Activated CD8-positive, alpha-beta T cell treated with anti-CD3 and anti-CD28 coated beads for 36 hours (primary cell): ENCODE measurements at regions of chr17 and their contacts with region 1.

Region 1: DNA sequence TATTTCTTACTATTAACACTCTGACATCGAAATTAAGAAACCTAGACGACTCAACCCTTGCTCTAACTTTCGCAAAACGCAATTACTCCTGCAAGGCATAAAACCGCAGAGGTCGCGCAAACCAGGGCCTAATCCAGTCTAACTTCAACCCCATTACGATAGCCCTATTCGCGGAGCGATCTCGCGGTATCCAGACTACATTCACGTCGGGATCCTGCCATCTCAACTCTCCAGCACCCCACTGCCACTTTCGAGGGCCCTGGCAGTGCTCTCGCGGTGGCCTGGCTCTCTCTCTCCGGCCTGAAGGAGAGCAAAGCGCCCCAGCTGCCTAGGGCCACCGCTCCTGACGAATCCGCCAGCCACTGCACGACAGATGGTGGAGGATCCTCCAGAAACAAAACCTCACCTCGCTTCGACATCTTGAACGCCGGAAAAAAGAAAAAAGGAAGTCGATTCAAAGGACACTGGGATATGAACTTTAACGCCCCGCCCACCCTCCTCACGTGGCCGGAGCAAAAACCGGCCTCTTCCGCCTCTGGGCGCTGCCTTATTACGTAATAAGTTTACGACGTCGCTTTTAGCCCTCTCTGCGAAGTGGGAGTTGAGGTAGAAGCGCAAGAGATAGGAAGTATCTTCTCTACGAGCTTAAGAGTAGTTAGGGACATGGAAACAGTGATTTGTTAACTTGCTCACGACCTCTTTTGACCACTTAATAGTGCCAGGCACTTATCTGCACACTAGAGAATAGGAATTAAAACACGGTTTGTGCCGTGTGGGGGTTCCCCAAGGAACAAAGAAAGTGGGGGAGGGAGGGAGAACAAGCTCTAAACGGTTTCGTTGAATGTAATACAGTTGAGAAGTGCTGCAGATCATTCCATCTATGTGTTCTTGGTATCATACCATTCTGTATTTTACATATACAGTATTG is at the start of gene RPL23:
- DNase-seq: peak; percentile 97
- ATAC-seq: peak; percentile 88
- H3K4me3 Mint-ChIP-seq: peak within 1 kb of the TSS; percentile 99
- H3K27ac Mint-ChIP-seq: peak within 1 kb of the TSS; percentile 99
- H3K4me1 Mint-ChIP-seq: peaks cover 40% of the 10 kb centered on the region
- H3K27me3 Mint-ChIP-seq: no peaks in the 10 kb centered on the region
- CTCF ChIP-seq: no peak
- total RNA-seq, gene RPL23: 1,908 to 1,957 TPM

Region 2: GRCh38 chr17:38752119-38752929 is 101.2 kb before region 1 on chr17 and contains the start of gene PSMB3:
- CTCF ChIA-PET with region 1: no interaction called
- POLR2A ChIA-PET with region 1: interaction called, 12 read pairs
- intact Hi-C with region 1: no loop called
- DNase-seq: peak; percentile 100
- ATAC-seq: peak; percentile 89
- H3K4me3 Mint-ChIP-seq: peak within 1 kb of the TSS; percentile 91
- H3K27ac Mint-ChIP-seq: peak within 1 kb of the TSS; percentile 96
- H3K4me1 Mint-ChIP-seq: peaks cover 39% of the 10 kb centered on the region
- H3K27me3 Mint-ChIP-seq: peaks cover 26% of the 10 kb centered on the region
- CTCF ChIP-seq: no peak
- total RNA-seq, gene PSMB3: 275 to 279 TPM

Region 3: GRCh38 chr17:38824899-38825761 is 28.4 kb before region 1 on chr17 and contains the start of gene CWC25:
- CTCF ChIA-PET with region 1: interaction called, 3 read pairs
- POLR2A ChIA-PET with region 1: interaction called, 48 read pairs
- intact Hi-C with region 1: no loop called
- DNase-seq: peak; percentile 95
- ATAC-seq: peak; percentile 85
- H3K4me3 Mint-ChIP-seq: peak within 1 kb of the TSS; percentile 93
- H3K27ac Mint-ChIP-seq: peak within 1 kb of the TSS; percentile 100
- H3K4me1 Mint-ChIP-seq: peaks cover 32% of the 10 kb centered on the region
- H3K27me3 Mint-ChIP-seq: no peaks in the 10 kb centered on the region
- CTCF ChIP-seq: no peak
- total RNA-seq, gene CWC25: 19.7 to 20.1 TPM

Region 4: GRCh38 chr17:38879878-38880682 is 26.5 kb after region 1 on chr17:
- CTCF ChIA-PET with region 1: no interaction called
- POLR2A ChIA-PET with region 1: interaction called, 106 read pairs
- intact Hi-C with region 1: no loop called
- DNase-seq: peak; percentile 46
- ATAC-seq: no peak
- H3K4me3 Mint-ChIP-seq: peak overlapping the region; percentile 44
- H3K27ac Mint-ChIP-seq: peak overlapping the region; percentile 85
- H3K4me1 Mint-ChIP-seq: peaks cover 86% of the 10 kb centered on the region
- H3K27me3 Mint-ChIP-seq: no peaks in the 10 kb centered on the region
- CTCF ChIP-seq: no peak

Region 5: GRCh38 chr17:38922538-38923297 is 69.2 kb after region 1 on chr17:
- CTCF ChIA-PET with region 1: interaction called, 4 read pairs
- POLR2A ChIA-PET with region 1: interaction called, 13 read pairs
- intact Hi-C with region 1: no loop called
- DNase-seq: no peak
- ATAC-seq: no peak
- H3K4me3 Mint-ChIP-seq: no peak overlapping the region
- H3K27ac Mint-ChIP-seq: peak overlapping the region; percentile 62
- H3K4me1 Mint-ChIP-seq: peaks cover 53% of the 10 kb centered on the region
- H3K27me3 Mint-ChIP-seq: no peaks in the 10 kb centered on the region
- CTCF ChIP-seq: no peak